ENCODE measurements at regions of chr7 and their contacts with region 1.

Region 1: DNA sequence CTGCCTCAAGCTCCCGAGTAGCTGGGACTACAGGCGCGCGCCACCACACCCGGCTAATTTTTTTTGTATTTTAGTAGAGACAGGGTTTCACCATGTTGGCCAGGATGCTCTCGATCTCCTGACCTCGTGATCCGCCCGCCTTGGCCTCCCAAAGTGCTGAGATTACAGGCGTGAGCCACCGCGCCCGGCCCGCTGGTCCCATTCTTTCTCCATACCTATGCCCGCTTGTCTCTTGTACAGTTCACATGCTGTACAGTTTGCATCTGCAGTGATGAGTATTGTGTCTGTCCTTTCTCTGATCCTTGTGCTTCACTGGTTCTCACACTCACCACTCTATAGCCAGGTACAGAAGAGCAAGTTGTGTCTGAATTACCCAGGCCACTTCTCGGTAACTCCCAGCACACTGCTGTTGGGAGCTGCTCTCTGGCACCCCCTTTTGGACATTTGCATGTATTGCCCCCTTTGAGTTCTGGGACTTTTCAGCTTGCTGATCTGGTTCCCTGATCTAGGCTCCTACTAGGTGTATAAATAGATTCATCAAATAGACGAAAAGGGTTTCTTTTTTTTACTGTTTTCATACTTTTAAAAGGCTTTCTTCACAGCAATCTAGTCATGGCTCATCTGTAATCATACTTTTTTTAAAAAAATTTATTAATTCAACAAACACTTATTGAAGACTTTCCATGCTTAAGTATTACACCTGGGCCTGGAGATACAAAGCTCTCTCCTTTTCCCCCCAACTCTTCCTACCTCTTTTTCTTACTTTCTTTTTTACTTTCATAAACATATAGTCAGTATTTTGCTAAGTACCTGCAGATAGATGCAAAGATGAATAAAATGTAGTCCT is 53.5 kb downstream of the AOAH start:
- DNase-seq: peak; percentile 85
- H3K4me3 Mint-ChIP-seq: no peak overlapping the region
- H3K27ac Mint-ChIP-seq: no peak overlapping the region
- H3K4me1 Mint-ChIP-seq: peaks cover 29% of the 10 kb centered on the region
- H3K27me3 Mint-ChIP-seq: peaks cover 2% of the 10 kb centered on the region

Region 2: GRCh38 chr7:36366718-36367560 is 303.9 kb before region 1 on chr7:
- CTCF ChIA-PET with region 1: no interaction called
- intact Hi-C with region 1: loop called (anchors 2 kb)
- DNase-seq: peak; percentile 89
- H3K4me3 Mint-ChIP-seq: peak overlapping the region; percentile 86
- H3K27ac Mint-ChIP-seq: no peak overlapping the region
- H3K4me1 Mint-ChIP-seq: no peaks in the 10 kb centered on the region
- H3K27me3 Mint-ChIP-seq: peaks cover 2% of the 10 kb centered on the region

Region 3: GRCh38 chr7:36473454-36474282 is 197.1 kb before region 1 on chr7:
- CTCF ChIA-PET with region 1: interaction called, 18 read pairs
- intact Hi-C with region 1: loop called (anchors 1 kb)
- DNase-seq: peak; percentile 70
- H3K4me3 Mint-ChIP-seq: no peak overlapping the region
- H3K27ac Mint-ChIP-seq: no peak overlapping the region
- H3K4me1 Mint-ChIP-seq: peaks cover 8% of the 10 kb centered on the region
- H3K27me3 Mint-ChIP-seq: no peaks in the 10 kb centered on the region

Region 4: GRCh38 chr7:36487756-36488336 is 183.0 kb before region 1 on chr7:
- CTCF ChIA-PET with region 1: interaction called, 101 read pairs
- intact Hi-C with region 1: loop called (anchors 1 kb)
- DNase-seq: peak; percentile 54
- H3K4me3 Mint-ChIP-seq: no peak overlapping the region
- H3K27ac Mint-ChIP-seq: no peak overlapping the region
- H3K4me1 Mint-ChIP-seq: peaks cover 2% of the 10 kb centered on the region
- H3K27me3 Mint-ChIP-seq: no peaks in the 10 kb centered on the region

Region 5: DNA sequence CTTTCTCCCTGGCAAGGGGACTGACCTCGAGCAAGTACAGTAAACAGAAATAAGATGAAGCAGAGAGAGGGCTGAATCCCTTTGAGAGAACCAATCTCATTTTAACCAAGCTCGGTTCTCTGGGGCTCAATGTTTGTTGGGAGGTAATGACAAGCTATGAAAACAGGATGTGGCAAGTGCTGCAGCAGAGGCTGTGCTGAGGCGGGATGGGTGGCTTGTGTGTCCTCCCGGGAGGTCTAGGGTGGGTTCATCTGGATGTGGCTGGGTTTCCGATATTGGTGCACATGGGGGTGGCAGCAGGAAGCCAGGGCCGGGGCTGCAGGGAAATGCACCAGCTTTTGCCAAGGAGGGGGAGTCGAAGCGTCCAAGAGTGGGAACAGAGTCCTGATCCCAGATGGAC is 31.0 kb before region 1 on chr7:
- CTCF ChIA-PET with region 1: interaction called, 20 read pairs
- intact Hi-C with region 1: no loop called
- DNase-seq: peak; percentile 54
- H3K4me3 Mint-ChIP-seq: no peak overlapping the region
- H3K27ac Mint-ChIP-seq: no peak overlapping the region
- H3K4me1 Mint-ChIP-seq: peaks cover 61% of the 10 kb centered on the region
- H3K27me3 Mint-ChIP-seq: no peaks in the 10 kb centered on the region

Region 6: DNA sequence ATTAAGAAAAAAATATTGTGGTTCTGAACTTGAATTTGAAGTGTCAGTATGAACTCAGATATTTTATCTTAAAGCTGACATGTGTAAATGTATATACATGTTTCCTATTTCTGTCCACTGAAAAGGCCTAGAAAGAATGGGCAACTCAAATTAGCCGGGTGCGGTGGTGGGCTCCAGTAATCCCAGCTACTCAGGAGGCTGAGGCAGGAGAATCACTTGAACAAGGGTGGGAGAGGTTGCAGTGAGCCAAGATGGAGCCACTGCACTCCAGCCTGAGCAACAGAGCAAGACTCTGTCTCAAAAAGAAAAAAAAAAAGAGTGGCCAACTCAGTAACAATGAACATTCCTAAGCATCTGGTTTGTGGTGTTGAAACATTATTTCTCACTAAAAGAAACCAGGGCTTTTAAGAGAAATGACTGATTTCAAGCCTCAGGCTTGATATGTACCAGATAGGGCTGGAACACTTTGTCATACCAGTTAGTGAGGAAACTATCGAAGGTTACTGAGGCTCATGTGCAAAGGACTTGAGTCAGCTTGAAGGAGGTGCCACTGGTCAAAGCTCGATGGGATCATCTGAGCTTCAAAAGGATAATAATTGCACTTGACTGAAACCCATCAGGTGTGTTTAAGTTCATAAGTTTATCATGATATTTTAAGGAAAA is 13.0 kb after region 1 on chr7:
- CTCF ChIA-PET with region 1: interaction called, 19 read pairs
- intact Hi-C with region 1: no loop called
- DNase-seq: no peak
- H3K4me3 Mint-ChIP-seq: no peak overlapping the region
- H3K27ac Mint-ChIP-seq: no peak overlapping the region
- H3K4me1 Mint-ChIP-seq: peaks cover 41% of the 10 kb centered on the region
- H3K27me3 Mint-ChIP-seq: no peaks in the 10 kb centered on the region

Region 7: GRCh38 chr7:37201003-37201875 is 530.4 kb after region 1 on chr7:
- CTCF ChIA-PET with region 1: no interaction called
- intact Hi-C with region 1: loop called (anchors 2 kb)
- DNase-seq: peak; percentile 64
- H3K4me3 Mint-ChIP-seq: no peak overlapping the region
- H3K27ac Mint-ChIP-seq: no peak overlapping the region
- H3K4me1 Mint-ChIP-seq: peaks cover 2% of the 10 kb centered on the region
- H3K27me3 Mint-ChIP-seq: no peaks in the 10 kb centered on the region

Measured in activated naive CD4-positive, alpha-beta T cell treated with anti-CD3 and anti-CD28 coated beads for 36 hours (primary cell).